Left ventricle myocardium superior (tissue), 1 donor: ENCODE measurements at regions of chr9 and their contacts with region 1.

Region 1: DNA sequence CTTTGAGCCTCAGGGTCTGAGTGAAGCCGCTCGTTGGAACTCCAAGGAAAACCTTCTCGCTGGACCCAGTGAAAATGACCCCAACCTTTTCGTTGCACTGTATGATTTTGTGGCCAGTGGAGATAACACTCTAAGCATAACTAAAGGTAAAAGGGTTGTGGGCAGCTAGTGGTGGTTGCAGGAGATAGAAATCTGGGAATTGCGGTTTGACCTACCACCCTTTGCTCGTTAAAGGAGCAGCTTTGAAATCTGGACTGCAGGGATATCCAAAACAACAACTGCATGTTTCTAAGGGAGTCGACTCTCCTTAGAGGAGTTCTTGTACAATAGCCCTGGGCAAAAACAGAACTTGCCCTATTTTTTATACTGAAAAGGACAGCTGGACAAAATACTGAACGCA is 19.0 kb downstream of the ABL1 start:
- DNase-seq: no peak
- ATAC-seq: no peak

Region 2: GRCh38 chr9:130715270-130716077 is 138.6 kb before region 1 on chr9:
- intact Hi-C with region 1: loop called (anchors 5 kb)
- DNase-seq: no peak
- ATAC-seq: no peak

Region 3: GRCh38 chr9:130782886-130783530 is 71.1 kb before region 1 on chr9:
- intact Hi-C with region 1: no loop called
- DNase-seq: no peak
- ATAC-seq: peak; percentile 11

Region 4: GRCh38 chr9:131160416-131161112 is 306.5 kb after region 1 on chr9:
- intact Hi-C with region 1: no loop called
- DNase-seq: no peak
- ATAC-seq: no peak